ENCODE measurements at regions of chr3 and their contacts with region 1.

Region 1: DNA sequence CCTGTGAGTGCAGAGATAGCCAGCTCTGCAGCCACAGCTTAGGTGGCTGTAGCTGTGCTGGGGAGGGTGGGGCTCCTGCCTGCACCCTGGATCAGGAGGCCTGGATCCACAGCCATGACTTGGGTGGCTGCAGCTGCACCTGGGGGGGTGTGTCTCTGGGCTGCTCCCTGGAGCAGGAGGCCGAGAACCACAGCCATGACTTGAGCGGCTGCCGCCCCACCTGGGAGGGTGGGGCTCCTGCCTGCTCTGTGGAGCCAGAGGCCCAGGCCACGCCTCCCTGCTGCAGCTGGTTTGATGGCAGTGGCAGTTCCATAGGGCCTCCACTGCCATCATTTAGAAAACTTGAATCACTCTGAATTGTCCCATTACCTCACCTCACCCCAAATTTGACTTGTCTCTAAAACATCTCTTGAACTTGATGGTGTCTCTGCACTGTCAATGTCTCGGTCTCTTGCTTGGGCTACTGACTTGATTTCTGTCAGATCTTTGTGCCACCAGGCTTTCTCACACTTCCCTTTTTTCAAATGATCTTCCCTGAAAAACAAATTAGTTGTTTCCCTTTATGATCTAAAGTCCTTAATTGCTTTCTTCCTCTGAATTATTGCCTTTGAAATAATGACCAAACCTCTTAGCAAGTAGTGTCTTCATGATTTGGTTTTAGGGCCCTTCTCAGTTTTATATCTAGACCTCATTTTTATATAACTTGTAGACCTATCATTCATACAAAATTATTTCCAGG is 313.2 kb upstream of the MME start:
- DNase-seq: no peak
- ATAC-seq: no peak
- H3K4me3 ChIP-seq: no peak overlapping the region
- H3K27ac ChIP-seq: no peak overlapping the region
- H3K4me1 ChIP-seq: no peaks in the 10 kb centered on the region
- H3K27me3 ChIP-seq: no peaks in the 10 kb centered on the region
- CTCF ChIP-seq: no peak

Region 2: DNA sequence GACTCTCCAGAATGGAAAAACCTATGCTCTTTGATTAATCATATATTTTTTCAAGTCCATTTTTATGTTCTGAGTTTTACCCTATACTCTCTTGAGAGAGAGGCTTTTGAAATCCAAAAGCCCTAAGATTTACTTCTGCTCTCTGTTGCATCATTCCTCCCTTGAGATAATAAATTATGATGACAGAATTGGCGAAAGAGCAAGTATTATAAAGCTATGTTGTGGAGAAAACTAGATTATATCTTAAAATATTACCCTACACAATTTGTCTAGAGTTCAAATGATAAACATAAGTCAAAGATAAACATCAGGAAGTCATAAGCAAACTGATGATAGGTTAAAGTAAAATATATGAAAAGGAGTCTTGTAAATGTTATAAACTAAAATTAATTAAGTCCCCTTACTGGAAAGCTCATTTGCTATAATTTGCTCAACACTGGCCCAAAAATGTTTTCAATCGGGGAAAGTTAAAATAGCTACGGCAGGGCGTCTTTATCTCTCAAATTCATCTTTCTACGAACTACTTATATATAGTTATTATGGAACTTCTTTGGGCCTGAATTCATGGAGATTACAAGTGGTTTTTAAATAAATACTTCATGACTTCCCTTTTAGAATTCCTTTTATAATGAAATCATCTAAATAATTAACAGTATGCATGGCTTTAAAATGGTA is 19.9 kb after region 1 on chr3:
- CTCF ChIA-PET with region 1: interaction called, 11 read pairs
- POLR2A ChIA-PET with region 1: no interaction called
- intact Hi-C with region 1: no loop called
- DNase-seq: no peak
- ATAC-seq: no peak
- H3K4me3 ChIP-seq: no peak overlapping the region
- H3K27ac ChIP-seq: no peak overlapping the region
- H3K4me1 ChIP-seq: no peaks in the 10 kb centered on the region
- H3K27me3 ChIP-seq: peaks cover 4% of the 10 kb centered on the region; the same call in 1 of the 2 replicates
- CTCF ChIP-seq: no peak

Measured in PC-3 (cell line).